Ovary (tissue), 10 donors: ENCODE measurements at regions of chr2 and their contacts with region 1.

Region 1: GRCh38 chr2:121489284-121489683 is 41.4 kb upstream of the RNU4ATAC start:
- DNase-seq: no peak
- H3K4me3 ChIP-seq: no peak overlapping the region
- H3K27ac ChIP-seq: no peak overlapping the region
- H3K4me1 ChIP-seq: peaks cover 4% of the 10 kb centered on the region
- H3K27me3 ChIP-seq: no peaks in the 10 kb centered on the region
- CTCF ChIP-seq: no peak
- EP300 ChIP-seq: no peak
- POLR2A ChIP-seq: no peak

Region 2: DNA sequence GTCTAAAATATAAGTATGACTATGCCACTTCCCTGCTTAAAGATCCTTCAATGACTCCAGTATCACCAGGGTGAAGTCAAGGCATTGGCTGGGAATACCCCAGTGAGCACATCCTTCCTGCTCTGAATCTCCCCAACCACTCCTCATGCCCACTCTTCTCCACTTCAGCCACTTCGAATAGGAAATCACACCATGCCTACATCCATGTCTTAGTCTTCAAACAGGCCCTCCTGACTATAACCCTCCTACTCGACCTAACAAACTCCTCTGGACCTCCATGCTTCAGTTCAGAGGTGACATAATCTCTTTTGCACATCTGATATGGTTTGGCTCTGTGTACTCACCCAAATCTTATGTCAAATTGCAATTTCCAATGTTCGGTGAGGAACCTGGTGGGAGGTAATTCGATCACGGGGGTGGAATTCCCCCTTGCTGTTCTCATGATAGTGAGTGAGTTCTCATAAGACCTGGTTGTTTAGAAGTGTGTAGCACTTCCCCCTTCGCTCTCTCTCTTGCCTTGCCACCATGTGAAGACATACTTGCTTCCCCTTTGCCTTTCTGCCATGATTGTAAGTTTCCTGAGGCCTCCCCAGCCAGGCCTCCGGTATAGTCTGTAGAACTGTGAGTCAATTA is 116.4 kb before region 1 on chr2:
- intact Hi-C with region 1: no loop called
- DNase-seq: no peak
- H3K4me3 ChIP-seq: no peak overlapping the region
- H3K27ac ChIP-seq: no peak overlapping the region
- H3K4me1 ChIP-seq: no peaks in the 10 kb centered on the region
- H3K27me3 ChIP-seq: no peaks in the 10 kb centered on the region
- CTCF ChIP-seq: no peak
- EP300 ChIP-seq: no peak
- POLR2A ChIP-seq: no peak

Region 3: GRCh38 chr2:121599963-121600651 is 110.8 kb after region 1 on chr2:
- intact Hi-C with region 1: loop called in 1 of 4 experiments (anchors 5 kb)
- DNase-seq: no peak
- H3K4me3 ChIP-seq: no peak overlapping the region
- H3K27ac ChIP-seq: no peak overlapping the region
- H3K4me1 ChIP-seq: peaks cover 9% of the 10 kb centered on the region
- H3K27me3 ChIP-seq: no peaks in the 10 kb centered on the region
- CTCF ChIP-seq: no peak
- EP300 ChIP-seq: no peak
- POLR2A ChIP-seq: no peak

Region 4: DNA sequence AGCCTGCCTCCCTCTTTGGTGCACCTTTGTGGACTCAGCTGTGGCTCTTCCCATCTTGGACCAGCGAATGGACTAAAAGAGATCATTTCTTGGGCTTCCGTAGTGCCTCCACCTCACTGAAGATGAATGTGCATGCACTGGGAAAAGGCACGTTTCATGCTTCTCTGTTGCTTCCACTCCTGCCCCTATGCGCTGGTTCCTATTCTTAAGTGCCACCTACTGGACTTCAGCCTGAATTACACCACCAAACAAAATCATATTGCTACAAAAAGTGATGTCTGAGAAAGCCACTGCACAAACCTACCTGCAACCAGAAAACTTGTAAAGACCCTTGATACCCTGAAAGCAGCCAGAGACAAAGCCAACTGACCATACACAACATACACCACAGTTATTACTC is 961.8 kb after region 1 on chr2:
- intact Hi-C with region 1: no loop called
- DNase-seq: no peak
- H3K4me3 ChIP-seq: no peak overlapping the region
- H3K27ac ChIP-seq: no peak overlapping the region
- H3K4me1 ChIP-seq: no peaks in the 10 kb centered on the region
- H3K27me3 ChIP-seq: no peaks in the 10 kb centered on the region
- CTCF ChIP-seq: no peak
- EP300 ChIP-seq: no peak
- POLR2A ChIP-seq: no peak